ENCODE measurements at regions of chr17 and their contacts with region 1.

Region 1: GRCh38 chr17:40355123-40355803 is 9.3 kb downstream of the GJD3 start:
- DNase-seq: peak; percentile 84
- ATAC-seq: peak; percentile 84
- H3K4me3 Mint-ChIP-seq: no peak overlapping the region
- H3K27ac Mint-ChIP-seq: no peak overlapping the region
- H3K4me1 Mint-ChIP-seq: peaks cover 19% of the 10 kb centered on the region
- H3K27me3 Mint-ChIP-seq: no peaks in the 10 kb centered on the region
- CTCF ChIP-seq: peak; percentile 95

Region 2: GRCh38 chr17:40331743-40332641 is 23.3 kb before region 1 on chr17:
- CTCF ChIA-PET with region 1: interaction called, 780 read pairs
- POLR2A ChIA-PET with region 1: no interaction called
- intact Hi-C with region 1: no loop called
- DNase-seq: peak; percentile 59
- ATAC-seq: peak; percentile 18
- H3K4me3 Mint-ChIP-seq: peak overlapping the region; percentile 15
- H3K27ac Mint-ChIP-seq: peak overlapping the region; percentile 80
- H3K4me1 Mint-ChIP-seq: peaks cover 71% of the 10 kb centered on the region
- H3K27me3 Mint-ChIP-seq: no peaks in the 10 kb centered on the region
- CTCF ChIP-seq: no peak

Region 3: GRCh38 chr17:40340880-40341807 is 14.1 kb before region 1 on chr17:
- CTCF ChIA-PET with region 1: interaction called, 43 read pairs
- POLR2A ChIA-PET with region 1: interaction called, 6 read pairs
- intact Hi-C with region 1: no loop called
- DNase-seq: peak; percentile 93
- ATAC-seq: peak; percentile 86
- H3K4me3 Mint-ChIP-seq: peak overlapping the region; percentile 68
- H3K27ac Mint-ChIP-seq: peak overlapping the region; percentile 87
- H3K4me1 Mint-ChIP-seq: peaks cover 73% of the 10 kb centered on the region
- H3K27me3 Mint-ChIP-seq: no peaks in the 10 kb centered on the region
- CTCF ChIP-seq: peak; percentile 39

Measured in activated CD8-positive, alpha-beta T cell treated with anti-CD3 and anti-CD28 coated beads for 36 hours (primary cell).